ENCODE measurements at regions of chr5 and their contacts with region 1.

Region 1: DNA sequence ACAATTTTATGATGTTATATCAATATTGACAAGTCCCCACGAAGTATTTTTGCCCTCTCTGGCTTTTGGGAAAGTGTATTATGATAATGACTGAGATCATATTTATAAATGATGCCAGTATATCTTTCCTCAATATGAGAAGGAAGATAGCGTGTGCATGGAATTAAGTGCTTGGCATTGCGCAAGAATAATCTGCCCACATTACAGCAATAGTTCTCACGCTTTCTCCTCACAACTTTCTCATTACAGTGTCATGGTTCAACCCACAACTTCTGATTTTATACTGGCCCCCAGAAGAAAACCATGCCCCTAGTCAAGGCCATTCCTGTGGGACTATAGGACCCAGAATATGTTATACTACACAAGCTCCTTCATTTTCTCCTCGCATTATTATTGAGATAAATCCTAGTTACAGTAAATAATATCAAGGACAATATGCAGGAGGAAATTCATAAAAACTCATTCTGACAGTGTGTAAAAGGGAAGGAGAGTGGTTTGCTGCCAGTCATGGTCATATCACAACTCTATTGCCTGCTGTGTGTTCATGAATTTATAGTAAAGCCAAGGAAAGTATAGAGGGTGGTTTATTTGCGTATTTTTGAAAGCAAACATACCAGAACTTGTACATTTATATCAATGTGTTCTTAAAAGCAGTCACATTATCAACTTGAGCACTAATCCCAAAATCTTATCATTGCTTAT is 114.1 kb downstream of the PIK3R1 start:
- DNase-seq: no peak
- H3K4me3 ChIP-seq: no peak overlapping the region
- H3K27ac ChIP-seq: no peak overlapping the region
- H3K4me1 ChIP-seq: peaks cover 7 to 28% (median 19%) of the 10 kb centered on the region in 4 donors
- H3K27me3 ChIP-seq: no peaks in the 10 kb centered on the region
- CTCF ChIP-seq: no peak
- EP300 ChIP-seq: no peak
- POLR2A ChIP-seq: no peak

Region 2: DNA sequence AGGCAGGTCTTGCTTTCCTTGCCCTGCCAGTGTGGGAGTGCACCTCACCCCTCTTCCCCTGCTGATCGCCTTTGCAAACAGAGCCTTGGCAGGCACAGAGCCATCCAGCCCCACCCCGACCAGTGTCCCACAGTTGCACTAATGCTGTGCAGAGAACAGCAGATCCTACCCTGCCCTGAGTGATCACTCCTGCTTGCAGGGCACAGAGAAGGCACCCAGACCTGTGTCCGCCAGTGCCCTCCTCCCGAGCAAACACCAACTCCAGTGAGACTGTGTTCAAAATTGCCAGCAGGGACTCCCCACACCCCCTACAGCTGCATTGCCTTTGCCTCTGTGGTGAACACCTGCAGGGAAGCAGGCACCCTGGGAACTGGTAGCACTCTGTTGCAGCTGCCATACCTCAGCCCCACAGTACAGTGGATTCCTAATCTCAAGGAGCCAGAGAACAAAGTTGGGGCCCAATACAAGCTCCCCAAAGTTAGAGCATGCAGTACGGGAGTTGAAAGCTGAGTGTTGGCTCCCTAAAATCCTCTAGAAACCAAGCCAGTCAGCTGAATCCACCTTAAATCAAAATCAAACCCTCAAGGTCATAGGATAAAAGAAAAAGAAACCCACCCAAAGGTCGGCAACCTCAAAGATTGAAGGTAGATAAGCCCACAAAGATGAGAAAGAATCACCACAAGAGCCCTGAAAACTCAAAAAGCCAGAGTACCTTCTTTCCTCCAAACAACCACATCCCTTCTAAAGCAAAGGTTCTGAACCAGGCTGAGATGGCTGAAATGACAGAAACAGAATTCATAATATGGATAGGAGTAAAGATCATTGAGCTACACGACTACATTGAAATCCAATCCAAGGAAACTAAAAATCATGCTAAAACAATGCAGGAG is 207.0 kb before region 1 on chr5:
- in situ Hi-C with region 1: no loop called
- intact Hi-C with region 1: no loop called
- DNase-seq: peak; percentile 76
- H3K4me3 ChIP-seq: no peak overlapping the region
- H3K27ac ChIP-seq: peak overlapping the region in 1 of 4 donors; percentile 58
- H3K4me1 ChIP-seq: peaks cover 0 to 9% (median 2%) of the 10 kb centered on the region in 4 donors
- H3K27me3 ChIP-seq: no peaks in the 10 kb centered on the region
- CTCF ChIP-seq: no peak
- EP300 ChIP-seq: no peak
- POLR2A ChIP-seq: no peak

Region 3: GRCh38 chr5:68460147-68460798 is 130.6 kb after region 1 on chr5:
- in situ Hi-C with region 1: no loop called
- intact Hi-C with region 1: no loop called
- DNase-seq: peak; percentile 26
- H3K4me3 ChIP-seq: no peak overlapping the region
- H3K27ac ChIP-seq: no peak overlapping the region
- H3K4me1 ChIP-seq: peaks cover 0 to 19% (median 3%) of the 10 kb centered on the region in 4 donors
- H3K27me3 ChIP-seq: no peaks in the 10 kb centered on the region
- CTCF ChIP-seq: peak; percentile 63 to 73 (median 69)
- EP300 ChIP-seq: no peak
- POLR2A ChIP-seq: no peak

Region 4: GRCh38 chr5:68576805-68577204 is 247.1 kb after region 1 on chr5:
- in situ Hi-C with region 1: no loop called
- intact Hi-C with region 1: loop called (anchors 5 kb)
- DNase-seq: no peak
- H3K4me3 ChIP-seq: no peak overlapping the region
- H3K27ac ChIP-seq: no peak overlapping the region
- H3K4me1 ChIP-seq: no peaks in the 10 kb centered on the region
- H3K27me3 ChIP-seq: no peaks in the 10 kb centered on the region
- CTCF ChIP-seq: no peak
- EP300 ChIP-seq: no peak
- POLR2A ChIP-seq: no peak

Region 5: DNA sequence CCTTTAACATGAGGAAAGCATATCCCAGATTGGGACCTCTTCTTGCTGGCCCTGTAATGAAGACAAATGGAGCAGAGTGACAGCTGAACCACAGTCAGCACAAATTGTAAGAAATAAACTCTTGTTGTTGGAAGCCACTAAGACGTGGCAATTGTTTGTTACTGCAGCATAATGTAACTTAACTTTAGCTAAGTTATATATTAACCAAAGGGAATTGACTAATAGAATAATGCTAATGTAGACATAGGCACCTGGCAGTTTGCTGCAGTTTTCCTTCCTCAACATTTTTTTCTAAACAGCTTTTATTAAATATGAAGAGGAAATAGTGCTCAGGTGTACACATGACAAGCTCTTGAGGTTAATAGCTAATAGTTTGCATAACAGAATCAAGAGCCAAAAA is 463.4 kb after region 1 on chr5:
- in situ Hi-C with region 1: no loop called
- intact Hi-C with region 1: no loop called
- DNase-seq: no peak
- H3K4me3 ChIP-seq: no peak overlapping the region
- H3K27ac ChIP-seq: no peak overlapping the region
- H3K4me1 ChIP-seq: no peaks in the 10 kb centered on the region
- H3K27me3 ChIP-seq: no peaks in the 10 kb centered on the region
- CTCF ChIP-seq: no peak
- EP300 ChIP-seq: no peak
- POLR2A ChIP-seq: no peak